Psoas muscle (tissue), 8 donors: ENCODE measurements at regions of chr2 and their contacts with region 1.

Region 1: DNA sequence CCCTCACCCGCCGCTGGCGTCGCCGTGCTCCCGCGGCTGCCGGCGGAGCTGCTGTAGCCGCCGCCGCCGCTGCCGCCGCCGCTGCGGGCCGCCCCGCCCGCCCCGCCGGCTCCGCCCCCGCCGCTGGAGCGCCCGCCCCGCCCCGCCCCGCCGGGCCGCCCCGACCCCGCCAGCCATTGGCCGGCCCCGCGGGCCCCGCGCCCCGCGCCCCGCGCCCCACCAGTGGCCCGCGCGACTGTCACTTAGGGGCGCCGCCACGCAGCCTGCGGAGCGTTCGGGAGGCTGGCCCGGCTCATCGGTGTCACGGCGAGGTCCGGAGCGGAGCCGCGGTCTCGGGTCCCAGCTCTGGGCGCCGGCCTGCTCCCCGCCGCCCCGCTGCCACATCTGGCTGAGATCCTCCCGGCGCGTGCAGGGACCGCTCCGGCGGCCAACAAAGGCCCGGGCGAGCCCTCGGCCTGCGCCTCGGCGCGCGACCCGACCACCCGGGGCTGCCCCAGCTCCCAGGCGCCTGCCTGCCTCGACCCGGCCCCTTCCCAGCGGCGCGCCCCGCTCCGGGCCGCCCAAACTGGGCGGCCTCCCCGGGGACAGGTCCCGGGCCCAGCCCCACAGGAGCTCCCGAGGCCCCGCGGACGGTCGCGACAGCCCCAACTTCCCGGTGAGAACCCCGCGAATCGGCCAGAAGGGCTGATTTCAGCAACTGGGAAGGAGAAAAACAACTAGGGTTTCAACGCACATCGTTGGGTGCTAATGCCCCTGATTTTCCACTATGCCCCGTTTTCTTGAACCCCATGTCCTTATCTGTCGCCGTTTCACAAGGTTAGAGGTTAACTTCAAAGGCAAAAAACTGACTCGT is at the start of gene MGAT4A:
- DNase-seq: peak; percentile 85 to 90
- ATAC-seq: peak; percentile 91 to 96 (median 94)
- H3K4me3 ChIP-seq: peak within 1 kb of the TSS; percentile 89
- H3K27ac ChIP-seq: peak within 1 kb of the TSS; percentile 85
- H3K4me1 ChIP-seq: peaks cover 10% of the 10 kb centered on the region
- H3K27me3 ChIP-seq: no peaks in the 10 kb centered on the region
- CTCF ChIP-seq: no peak
- total RNA-seq, gene MGAT4A: 7.0 to 12.3 (median 9.0) TPM

Region 2: DNA sequence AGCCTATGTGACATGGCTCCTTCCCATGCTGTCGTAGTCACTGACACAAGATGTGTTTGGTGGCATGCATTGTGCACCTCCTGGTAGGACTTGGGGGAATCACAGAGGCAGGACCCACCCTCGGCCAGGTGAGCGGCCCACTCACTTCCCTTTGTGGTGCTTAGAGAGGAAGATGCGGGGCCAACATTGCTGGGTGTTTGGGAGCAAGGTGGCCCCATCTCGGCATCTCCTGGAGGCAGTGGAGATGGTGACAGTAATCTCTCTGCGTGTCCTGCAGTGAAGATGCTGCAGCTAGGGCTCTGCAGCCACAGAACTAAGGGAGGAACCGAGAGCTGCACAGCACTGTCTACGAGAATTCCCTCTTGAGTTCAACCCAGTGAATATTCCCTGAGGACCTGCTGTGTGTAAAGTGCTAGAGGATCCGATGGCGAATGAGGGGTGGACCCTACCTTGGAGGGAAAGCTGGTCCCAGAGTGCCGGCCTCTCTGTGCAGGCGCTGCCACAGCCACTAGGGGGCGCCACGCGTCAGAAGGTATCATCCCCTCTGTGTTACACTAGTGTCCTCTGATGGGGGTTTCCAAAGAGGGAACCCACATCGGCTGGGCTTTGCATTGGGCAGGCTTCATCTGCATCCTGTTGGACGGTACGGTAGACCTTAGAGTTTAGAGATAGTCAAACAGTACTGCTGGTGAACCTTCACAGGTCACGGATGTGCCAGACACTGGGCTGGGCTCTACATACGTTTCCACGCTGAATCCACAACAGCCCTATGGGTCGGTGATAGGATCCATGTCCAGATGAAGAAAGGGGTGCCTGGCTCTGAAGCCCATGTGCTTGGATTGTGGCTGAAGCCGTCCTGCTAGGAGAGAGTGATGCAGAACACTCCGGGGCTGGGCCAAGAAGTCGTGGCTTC is 162.1 kb before region 1 on chr2:
- intact Hi-C with region 1: no loop called
- DNase-seq: peak in 1 of 2 donors; percentile 39
- ATAC-seq: peak in 3 of 4 donors; percentile 44 to 63 (median 56)
- H3K4me3 ChIP-seq: no peak overlapping the region
- H3K27ac ChIP-seq: no peak overlapping the region
- H3K4me1 ChIP-seq: no peaks in the 10 kb centered on the region
- H3K27me3 ChIP-seq: no peaks in the 10 kb centered on the region
- CTCF ChIP-seq: peak; percentile 75

Region 3: DNA sequence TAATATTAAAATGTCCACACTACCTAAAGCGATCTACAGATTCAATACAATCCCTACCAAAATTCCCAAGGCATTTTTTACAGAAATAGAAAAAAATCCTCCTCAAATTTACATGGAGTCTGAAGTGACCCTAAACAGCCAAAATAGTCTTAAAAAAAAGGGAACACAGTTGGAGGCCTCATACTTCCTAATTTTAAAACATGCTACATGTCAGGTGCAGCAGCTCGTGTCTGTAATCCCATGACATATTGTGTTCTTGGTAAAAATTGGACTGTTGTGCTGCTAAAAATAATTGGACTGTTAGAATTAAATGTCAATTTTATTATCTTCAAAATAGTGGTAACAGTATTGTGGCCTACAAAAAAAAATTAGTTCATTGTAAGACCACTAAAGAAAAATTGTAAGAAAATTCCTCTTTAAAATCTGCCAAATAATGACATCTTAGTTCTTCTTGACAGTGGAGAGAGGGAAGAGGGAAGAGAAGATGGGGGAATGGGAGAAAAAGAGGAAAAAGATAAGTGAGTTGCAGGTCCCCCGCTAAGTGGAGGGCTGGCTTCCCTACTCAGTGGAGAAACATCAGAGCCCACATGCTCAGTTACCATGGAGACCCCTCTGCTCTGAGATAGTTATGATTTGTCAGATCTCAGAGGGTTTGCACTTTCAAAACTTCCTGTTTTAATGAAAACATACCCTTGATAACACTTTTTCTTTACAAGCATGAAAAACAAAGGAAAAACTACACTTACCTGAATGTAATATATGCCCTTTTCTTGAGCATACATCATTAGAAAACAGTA is 76.4 kb before region 1 on chr2:
- intact Hi-C with region 1: loop called (anchors 5 kb)
- DNase-seq: no peak
- ATAC-seq: no peak
- H3K4me3 ChIP-seq: no peak overlapping the region
- H3K27ac ChIP-seq: no peak overlapping the region
- H3K4me1 ChIP-seq: no peaks in the 10 kb centered on the region
- H3K27me3 ChIP-seq: no peaks in the 10 kb centered on the region
- CTCF ChIP-seq: no peak

Region 4: GRCh38 chr2:98669675-98670074 is 61.6 kb before region 1 on chr2:
- intact Hi-C with region 1: loop called in 1 of 2 experiments (anchors 10 kb)
- DNase-seq: no peak
- ATAC-seq: peak; percentile 34 to 74 (median 61)
- H3K4me3 ChIP-seq: no peak overlapping the region
- H3K27ac ChIP-seq: no peak overlapping the region
- H3K4me1 ChIP-seq: no peaks in the 10 kb centered on the region
- H3K27me3 ChIP-seq: no peaks in the 10 kb centered on the region
- CTCF ChIP-seq: no peak

Region 5: DNA sequence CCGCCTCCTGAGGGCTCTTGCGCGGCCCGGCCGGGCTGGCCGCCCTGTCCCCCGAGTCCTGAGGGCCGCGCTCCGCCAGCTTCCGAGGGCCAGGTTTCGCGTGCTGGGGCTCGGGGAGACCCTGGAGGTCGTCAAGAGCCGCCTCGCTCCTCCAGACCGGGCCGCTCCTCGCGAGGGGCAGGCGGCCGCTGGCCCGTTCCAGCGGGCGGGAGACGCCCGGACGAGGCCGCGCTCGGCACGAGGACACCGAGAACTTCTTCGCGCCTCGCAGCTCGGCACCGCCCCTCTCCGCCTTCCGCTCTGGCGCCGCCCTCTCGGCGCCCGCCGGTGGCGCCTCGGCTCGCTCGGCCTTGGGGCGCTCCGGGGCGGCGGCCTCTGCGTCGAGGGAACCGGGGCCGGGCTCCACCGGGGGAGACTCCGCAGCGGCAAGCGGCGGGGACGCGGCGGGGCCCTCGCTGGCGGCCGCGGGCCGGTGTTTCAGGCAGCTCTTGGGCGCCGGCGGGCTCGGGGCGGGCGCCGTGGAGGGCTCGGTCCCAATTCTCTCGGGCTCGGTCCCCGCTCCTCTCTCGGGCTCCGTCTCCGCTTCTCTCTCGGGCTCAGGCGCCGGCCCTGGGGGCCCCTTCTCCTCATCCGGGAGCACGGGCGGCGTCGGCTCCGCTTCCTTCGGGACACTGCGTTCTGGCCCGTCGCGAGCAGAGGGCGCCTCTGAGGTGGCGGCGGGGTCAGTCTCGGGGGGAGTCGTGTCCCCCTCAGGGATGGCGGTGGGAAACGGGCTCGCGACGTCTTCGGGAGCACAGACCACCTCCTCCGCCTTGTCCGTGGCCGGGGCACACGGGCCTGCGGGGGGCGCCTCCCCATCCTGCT is 91.3 kb after region 1 on chr2:
- intact Hi-C with region 1: loop called in 1 of 2 experiments (anchors 5 kb)
- DNase-seq: peak; percentile 53 to 69
- ATAC-seq: peak; percentile 58 to 84 (median 70)
- H3K4me3 ChIP-seq: peak overlapping the region; percentile 63
- H3K27ac ChIP-seq: peak overlapping the region; percentile 67
- H3K4me1 ChIP-seq: no peaks in the 10 kb centered on the region
- H3K27me3 ChIP-seq: peaks cover 0 to 28% (median 16%) of the 10 kb centered on the region in 3 donors
- CTCF ChIP-seq: peak; percentile 17

Region 6: DNA sequence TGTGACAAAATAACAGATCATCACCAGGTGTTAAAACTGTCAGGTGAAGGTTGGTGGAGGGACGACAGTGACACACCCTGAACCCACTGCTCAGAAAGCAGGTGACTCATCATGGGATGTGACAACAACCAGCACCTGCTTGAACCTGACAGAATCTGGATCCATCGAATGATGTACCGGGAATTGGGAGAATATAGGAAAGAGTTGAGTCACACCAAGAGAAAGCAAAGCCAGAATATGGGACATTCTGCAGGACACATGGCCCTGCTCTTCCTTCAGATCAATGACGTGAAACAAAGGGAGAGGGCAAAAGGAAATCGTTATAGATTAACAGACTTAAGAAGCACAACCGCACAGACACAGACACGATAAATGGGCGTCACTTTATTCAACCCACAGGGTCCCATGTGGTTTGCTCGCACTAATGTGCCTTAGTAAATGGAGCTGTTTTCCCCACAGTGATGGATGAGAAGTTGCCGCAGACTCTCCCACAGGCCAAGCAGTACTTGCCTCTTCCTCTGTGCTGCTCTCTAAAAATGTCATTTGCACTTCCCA is 104.6 kb after region 1 on chr2:
- intact Hi-C with region 1: no loop called
- DNase-seq: no peak
- ATAC-seq: no peak
- H3K4me3 ChIP-seq: no peak overlapping the region
- H3K27ac ChIP-seq: no peak overlapping the region
- H3K4me1 ChIP-seq: no peaks in the 10 kb centered on the region
- H3K27me3 ChIP-seq: no peaks in the 10 kb centered on the region
- CTCF ChIP-seq: no peak

Region 7: GRCh38 chr2:99249951-99250350 is 518.7 kb after region 1 on chr2:
- intact Hi-C with region 1: no loop called
- DNase-seq: no peak
- ATAC-seq: no peak
- H3K4me3 ChIP-seq: no peak overlapping the region
- H3K27ac ChIP-seq: no peak overlapping the region
- H3K4me1 ChIP-seq: no peaks in the 10 kb centered on the region
- H3K27me3 ChIP-seq: no peaks in the 10 kb centered on the region
- CTCF ChIP-seq: no peak